Activated CD8-positive, alpha-beta T cell treated with anti-CD3 and anti-CD28 coated beads, Interleukin-2, amount 10 ng/mL, durations not matched to agents 7 days and 5 days (primary cell): ENCODE measurements at regions of chrX and their contacts with region 1.

Region 1: GRCh38 chrX:150683536-150684146 is 9.6 kb upstream of the MTMR1 start:
- DNase-seq: peak; percentile 45
- ATAC-seq: no peak
- H3K4me3 Mint-ChIP-seq: no peak overlapping the region
- H3K27ac Mint-ChIP-seq: no peak overlapping the region
- H3K4me1 Mint-ChIP-seq: peaks cover 8% of the 10 kb centered on the region
- H3K27me3 Mint-ChIP-seq: no peaks in the 10 kb centered on the region

Region 2: DNA sequence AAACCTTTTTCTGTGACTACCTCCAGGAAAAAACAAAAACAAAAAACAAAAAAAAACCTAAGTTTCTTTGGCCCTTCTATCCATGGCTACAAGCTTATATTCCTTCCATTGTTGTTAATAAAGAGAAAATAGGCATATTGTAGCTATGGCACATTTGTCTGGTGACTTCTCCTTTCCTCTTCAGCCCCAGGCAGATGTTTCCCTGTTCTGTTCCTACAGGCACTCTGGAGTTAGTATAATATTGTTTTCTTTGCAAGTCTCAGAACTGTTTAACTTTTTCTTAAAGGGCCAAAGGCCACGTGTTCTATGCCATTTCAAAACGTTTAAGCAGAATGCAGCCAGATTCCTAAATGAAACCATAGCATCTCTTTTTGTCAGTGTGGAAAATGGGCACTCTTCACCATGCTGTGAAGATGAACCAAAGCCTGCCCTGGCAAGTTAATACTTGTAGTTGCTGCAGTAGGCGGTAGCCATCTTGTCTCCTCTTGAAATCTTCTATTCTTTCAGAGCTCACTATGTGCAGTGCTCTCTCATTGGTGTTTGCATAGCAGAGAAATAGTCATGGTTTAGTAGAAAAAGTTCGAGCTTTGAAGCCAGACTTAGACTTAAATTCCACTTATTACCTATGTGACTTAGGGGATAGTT is 35.2 kb before region 1 on chrX:
- CTCF ChIA-PET with region 1: no interaction called
- POLR2A ChIA-PET with region 1: no interaction called
- DNase-seq: no peak
- ATAC-seq: no peak
- H3K4me3 Mint-ChIP-seq: no peak overlapping the region
- H3K27ac Mint-ChIP-seq: no peak overlapping the region
- H3K4me1 Mint-ChIP-seq: peaks cover 5% of the 10 kb centered on the region
- H3K27me3 Mint-ChIP-seq: no peaks in the 10 kb centered on the region

Region 3: GRCh38 chrX:150693775-150694574 is 10.3 kb after region 1 on chrX:
- CTCF ChIA-PET with region 1: interaction called, 47 read pairs
- POLR2A ChIA-PET with region 1: interaction called, 8 read pairs
- DNase-seq: peak; percentile 87
- ATAC-seq: peak; percentile 70
- H3K4me3 Mint-ChIP-seq: peak overlapping the region; percentile 91
- H3K27ac Mint-ChIP-seq: peak overlapping the region; percentile 98
- H3K4me1 Mint-ChIP-seq: peaks cover 60% of the 10 kb centered on the region
- H3K27me3 Mint-ChIP-seq: no peaks in the 10 kb centered on the region

Region 4: DNA sequence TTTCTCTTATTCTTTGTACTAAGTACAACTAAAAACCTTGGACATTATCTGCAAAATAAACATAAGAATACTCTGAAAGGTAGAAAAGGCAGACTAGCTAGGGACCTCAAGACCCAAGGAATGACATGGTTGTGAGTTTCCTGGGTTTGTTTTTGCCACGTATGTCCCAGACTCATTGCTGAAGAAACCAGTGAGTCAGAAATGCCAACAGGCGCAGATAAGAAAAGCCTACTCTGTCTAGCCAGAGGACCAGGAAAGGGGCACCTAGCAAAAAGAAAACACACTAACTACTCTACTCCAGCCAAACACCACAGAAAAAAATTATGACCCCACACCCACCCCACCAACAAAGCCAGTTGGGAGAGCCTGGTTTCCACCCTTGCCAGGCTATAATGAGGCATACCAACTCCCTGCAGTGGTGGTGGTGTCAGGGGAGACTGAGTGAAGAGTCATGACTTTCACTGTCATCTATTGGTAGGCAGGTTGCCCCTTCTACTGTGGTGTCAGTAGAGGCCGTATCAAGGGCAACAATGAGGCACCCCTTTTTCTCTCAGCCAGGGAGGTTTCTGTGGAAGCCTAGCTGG is 20.5 kb after region 1 on chrX:
- CTCF ChIA-PET with region 1: interaction called, 12 read pairs
- POLR2A ChIA-PET with region 1: no interaction called
- DNase-seq: no peak
- ATAC-seq: no peak
- H3K4me3 Mint-ChIP-seq: no peak overlapping the region
- H3K27ac Mint-ChIP-seq: no peak overlapping the region
- H3K4me1 Mint-ChIP-seq: peaks cover 13% of the 10 kb centered on the region
- H3K27me3 Mint-ChIP-seq: no peaks in the 10 kb centered on the region

Region 5: DNA sequence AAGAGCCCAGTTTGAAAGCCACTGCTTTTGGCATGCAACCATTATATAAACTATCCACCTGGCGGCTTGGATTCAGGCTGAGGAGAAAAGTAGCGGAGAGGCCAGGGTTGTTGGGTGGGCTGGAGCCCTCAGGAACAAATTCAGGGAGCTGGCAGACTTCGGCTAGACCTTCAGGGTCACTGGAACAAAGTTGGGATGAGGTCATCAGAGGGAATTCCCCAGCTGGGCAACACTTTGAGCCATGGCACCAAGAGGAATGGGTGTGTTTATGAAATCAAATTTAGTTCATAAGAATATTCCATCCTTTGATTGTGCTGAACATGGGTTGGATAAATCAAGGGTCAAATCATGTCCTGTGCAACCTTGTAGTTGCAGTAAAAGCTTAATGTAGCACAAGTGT is 31.5 kb after region 1 on chrX:
- CTCF ChIA-PET with region 1: interaction called, 65 read pairs
- POLR2A ChIA-PET with region 1: no interaction called
- DNase-seq: no peak
- ATAC-seq: no peak
- H3K4me3 Mint-ChIP-seq: no peak overlapping the region
- H3K27ac Mint-ChIP-seq: no peak overlapping the region
- H3K4me1 Mint-ChIP-seq: peaks cover 14% of the 10 kb centered on the region
- H3K27me3 Mint-ChIP-seq: no peaks in the 10 kb centered on the region